Colonic mucosa (tissue), 4 donors: ENCODE measurements at regions of chr2 and their contacts with region 1.

Region 1: DNA sequence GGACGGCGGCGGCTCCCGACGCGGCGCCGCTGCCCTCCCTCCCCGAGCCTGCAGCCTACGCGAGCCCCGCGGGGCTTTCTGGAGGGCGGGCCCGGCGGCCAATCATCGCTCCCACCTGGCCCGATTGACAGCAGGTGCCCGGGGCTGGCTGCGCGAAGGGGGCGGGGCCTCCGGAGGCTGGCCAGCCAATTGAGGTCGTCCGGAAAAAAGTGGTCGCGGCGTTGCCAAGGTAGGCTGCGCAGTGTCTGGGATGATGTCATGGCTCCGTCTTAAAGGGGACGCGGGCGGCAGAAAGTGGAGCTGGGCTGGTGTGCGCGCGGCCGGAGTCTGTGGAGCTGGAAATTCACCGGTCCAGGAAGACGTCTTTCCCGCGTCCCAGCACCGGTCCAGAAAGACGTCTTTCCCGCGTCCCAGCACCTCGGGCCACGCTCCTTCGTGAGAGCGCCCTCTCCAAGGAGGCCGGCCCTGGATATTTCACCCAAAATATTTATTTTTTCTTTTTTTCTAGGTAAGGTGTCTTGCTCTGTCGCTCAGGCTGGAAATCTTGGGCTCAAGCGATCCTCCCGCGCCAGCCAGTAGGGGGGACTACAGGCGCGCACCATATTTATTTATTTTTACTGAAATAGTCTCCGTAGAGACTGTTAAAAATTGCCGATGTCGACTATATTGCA is at the start of gene ACTR1B:
- DNase-seq: peak; percentile 98
- H3K4me3 ChIP-seq: peak within 1 kb of the TSS; percentile 71
- H3K27ac ChIP-seq: peak within 1 kb of the TSS; percentile 100
- H3K4me1 ChIP-seq: peaks cover 8% of the 10 kb centered on the region
- H3K27me3 ChIP-seq: no peaks in the 10 kb centered on the region
- CTCF ChIP-seq: no peak
- total RNA-seq, gene ACTR1B: 71.3 to 82.9 TPM

Region 2: DNA sequence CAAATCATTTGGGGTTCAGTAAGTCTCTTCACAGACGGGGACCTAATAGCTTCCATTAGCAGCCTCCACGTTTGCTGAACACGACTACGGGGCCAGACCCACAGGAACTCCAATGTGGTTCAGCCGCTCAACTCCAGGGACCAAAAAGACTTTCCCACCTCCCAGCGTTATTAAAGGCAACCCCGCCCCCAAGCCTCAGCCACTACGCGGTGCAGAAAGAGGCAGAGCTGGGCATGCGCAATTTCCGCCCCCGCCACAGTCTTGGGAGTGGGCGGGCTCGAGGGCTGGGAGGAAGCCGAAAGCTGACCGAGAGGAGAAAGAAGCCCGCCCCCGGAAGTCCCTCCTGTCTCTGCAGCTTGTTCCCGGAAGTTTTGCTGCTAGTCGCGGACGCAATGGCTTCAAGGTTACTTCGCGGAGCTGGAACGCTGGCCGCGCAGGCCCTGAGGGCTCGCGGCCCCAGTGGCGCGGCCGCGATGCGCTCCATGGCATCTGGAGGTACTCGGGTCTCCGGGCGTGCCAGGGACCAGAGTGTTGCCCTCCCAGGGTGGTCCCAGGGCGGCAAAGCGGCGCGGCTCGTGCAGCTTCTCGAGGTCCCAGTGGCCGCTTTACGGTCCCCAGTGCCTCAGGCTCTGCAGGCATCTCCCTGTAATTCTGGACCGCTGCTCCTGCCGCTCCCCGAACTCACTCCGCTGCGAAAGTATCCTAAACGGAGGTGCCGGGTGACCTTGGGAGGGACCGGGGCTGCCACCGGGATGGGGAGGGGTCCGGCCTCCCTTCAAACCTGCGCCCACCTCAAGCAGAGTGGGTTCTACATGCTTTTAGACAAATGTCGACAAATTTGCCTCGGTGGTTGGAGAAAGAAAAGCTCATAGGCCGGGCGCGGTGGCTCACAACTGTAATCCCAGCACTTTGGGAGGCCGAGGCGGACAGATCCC is 18.1 kb before region 1 on chr2 and contains the start of gene COX5B:
- intact Hi-C with region 1: loop called (anchors 2 kb)
- DNase-seq: peak; percentile 99
- H3K4me3 ChIP-seq: peak within 1 kb of the TSS; percentile 89
- H3K27ac ChIP-seq: peak within 1 kb of the TSS; percentile 94
- H3K4me1 ChIP-seq: peaks cover 6% of the 10 kb centered on the region
- H3K27me3 ChIP-seq: no peaks in the 10 kb centered on the region
- CTCF ChIP-seq: no peak
- total RNA-seq, gene COX5B: 633 to 720 TPM

Region 3: DNA sequence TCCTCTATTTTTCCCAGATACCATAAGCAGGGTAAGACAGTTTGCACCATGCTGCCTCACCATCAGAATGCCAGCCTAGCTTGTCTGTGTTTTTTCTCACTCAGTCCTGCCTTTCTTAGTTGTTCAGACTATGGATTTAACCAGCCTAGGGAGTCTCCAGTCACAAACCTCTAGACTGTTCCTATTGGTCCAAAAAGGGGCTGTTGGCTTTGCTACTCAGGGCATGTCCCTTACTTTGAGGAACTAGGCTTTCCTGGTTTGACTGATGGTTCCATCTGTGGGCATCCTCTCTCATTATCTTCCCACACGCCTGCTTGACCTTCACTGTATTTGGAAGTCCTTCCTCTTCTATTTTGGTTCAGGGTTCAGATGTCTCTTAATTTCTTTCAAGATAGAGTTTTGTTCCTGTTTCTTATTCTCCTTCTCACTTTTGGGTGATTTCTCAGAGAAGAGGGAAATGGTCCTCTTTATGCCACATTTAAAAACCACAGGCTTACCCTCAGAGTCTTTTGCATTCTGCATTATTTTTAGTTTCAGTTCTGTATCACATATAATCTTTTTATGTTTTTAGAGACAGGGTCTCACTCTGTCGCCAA is 362.9 kb after region 1 on chr2:
- intact Hi-C with region 1: no loop called
- DNase-seq: peak; percentile 15
- H3K4me3 ChIP-seq: no peak overlapping the region
- H3K27ac ChIP-seq: no peak overlapping the region
- H3K4me1 ChIP-seq: no peaks in the 10 kb centered on the region
- H3K27me3 ChIP-seq: no peaks in the 10 kb centered on the region
- CTCF ChIP-seq: no peak